T-cell (primary cell): ENCODE measurements at regions of chr7 and their contacts with region 1.

Region 1: DNA sequence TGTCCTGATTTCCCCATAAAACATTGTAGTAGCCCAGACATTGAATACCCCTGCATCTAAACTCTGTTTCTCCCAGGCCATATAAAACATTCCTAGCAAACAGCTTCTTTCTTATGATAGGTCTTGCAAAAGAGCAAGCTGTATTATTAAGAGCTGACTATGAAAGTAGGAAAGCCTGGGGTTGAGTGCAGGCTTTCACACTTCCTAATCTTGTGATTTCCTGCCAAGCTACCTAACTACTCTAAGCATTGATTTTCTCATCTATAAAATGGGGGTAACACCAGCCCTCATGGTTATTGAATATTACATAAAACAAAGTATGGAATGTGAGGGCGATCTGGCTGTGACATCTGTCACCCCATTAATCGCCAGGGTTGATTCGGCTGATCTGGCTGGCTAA is 81.8 kb downstream of the ZNF277 start:
- DNase-seq: no peak
- ATAC-seq: no peak
- H3K4me3 ChIP-seq: no peak overlapping the region
- H3K4me3 Mint-ChIP-seq: no peak overlapping the region
- H3K27ac ChIP-seq: no peak overlapping the region
- H3K27ac Mint-ChIP-seq: no peak overlapping the region
- H3K4me1 ChIP-seq: peaks cover 4 to 5% of the 10 kb centered on the region in 2 experiments
- H3K4me1 Mint-ChIP-seq: peaks cover 21 to 25% (median 23%) of the 10 kb centered on the region in 3 donors
- H3K27me3 ChIP-seq: no peaks in the 10 kb centered on the region
- H3K27me3 Mint-ChIP-seq: no peaks in the 10 kb centered on the region

Region 2: DNA sequence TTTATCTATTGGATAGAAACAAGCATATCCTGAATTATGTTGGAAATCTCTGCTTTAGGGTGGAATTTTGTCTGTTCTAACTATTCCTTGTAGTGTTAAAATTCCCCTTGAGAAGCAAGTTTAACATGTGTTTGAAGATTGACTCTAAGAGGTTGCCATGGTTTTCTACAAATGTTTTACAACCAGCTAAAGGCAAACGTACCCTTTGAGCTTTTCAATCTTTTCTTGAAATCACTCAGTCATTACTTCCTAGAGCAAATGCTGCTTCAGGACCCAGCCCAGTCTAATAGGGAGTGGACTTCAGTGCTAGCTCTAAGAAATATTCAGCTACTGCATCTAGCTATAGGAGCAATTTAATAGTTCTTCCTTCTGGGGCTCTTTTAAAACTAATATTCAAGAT is 43.2 kb after region 1 on chr7:
- CTCF ChIA-PET with region 1: no interaction called
- POLR2A ChIA-PET with region 1: no interaction called
- DNase-seq: no peak
- ATAC-seq: no peak
- H3K4me3 ChIP-seq: no peak overlapping the region
- H3K4me3 Mint-ChIP-seq: no peak overlapping the region
- H3K27ac ChIP-seq: no peak overlapping the region
- H3K27ac Mint-ChIP-seq: no peak overlapping the region
- H3K4me1 ChIP-seq: no peaks in the 10 kb centered on the region
- H3K4me1 Mint-ChIP-seq: no peaks in the 10 kb centered on the region
- H3K27me3 ChIP-seq: no peaks in the 10 kb centered on the region
- H3K27me3 Mint-ChIP-seq: no peaks in the 10 kb centered on the region

Region 3: GRCh38 chr7:112594397-112594796 is 306.1 kb after region 1 on chr7:
- CTCF ChIA-PET with region 1: interaction called in 1 of 2 experiments, 14 read pairs
- POLR2A ChIA-PET with region 1: no interaction called
- DNase-seq: no peak
- ATAC-seq: no peak
- H3K4me3 ChIP-seq: no peak overlapping the region
- H3K4me3 Mint-ChIP-seq: no peak overlapping the region
- H3K27ac ChIP-seq: no peak overlapping the region
- H3K27ac Mint-ChIP-seq: no peak overlapping the region
- H3K4me1 ChIP-seq: no peaks in the 10 kb centered on the region
- H3K4me1 Mint-ChIP-seq: no peaks in the 10 kb centered on the region
- H3K27me3 ChIP-seq: no peaks in the 10 kb centered on the region
- H3K27me3 Mint-ChIP-seq: peaks cover 0 to 11% of the 10 kb centered on the region in 2 donors